ENCODE measurements at regions of chr11 and their contacts with region 1.

Region 1: GRCh38 chr11:19071255-19071654 is 10.7 kb upstream of the MRGPRX2 start:
- H3K4me3 ChIP-seq: no peak overlapping the region
- H3K27ac ChIP-seq: no peak overlapping the region
- H3K4me1 ChIP-seq: no peaks in the 10 kb centered on the region
- CTCF ChIP-seq: peak; percentile 96

Region 2: GRCh38 chr11:18958221-18958910 is 112.9 kb before region 1 on chr11:
- CTCF ChIA-PET with region 1: no interaction called
- POLR2A ChIA-PET with region 1: no interaction called
- H3K4me3 ChIP-seq: no peak overlapping the region
- H3K27ac ChIP-seq: no peak overlapping the region
- H3K4me1 ChIP-seq: no peaks in the 10 kb centered on the region
- CTCF ChIP-seq: no peak

Region 3: DNA sequence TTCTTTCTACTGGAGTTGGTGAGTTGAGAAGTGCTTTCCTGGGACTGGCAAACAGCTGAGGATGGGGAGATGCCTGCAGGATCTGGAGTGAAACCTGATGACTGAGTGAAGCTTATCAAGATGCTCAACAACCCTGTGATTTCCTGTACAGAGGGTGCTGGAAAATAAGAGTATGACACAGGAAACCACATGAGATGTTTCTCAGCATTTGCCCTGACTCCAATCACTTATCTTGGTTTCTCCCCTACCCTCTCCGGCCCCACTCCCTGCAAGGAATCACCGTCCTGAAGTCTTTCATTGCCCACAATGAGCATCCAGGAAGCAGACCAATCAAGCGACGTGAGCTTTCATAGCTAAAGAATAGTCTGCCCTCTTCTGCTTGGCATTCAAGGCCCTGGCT is 10.6 kb before region 1 on chr11 and contains the start of gene MRGPRX2:
- CTCF ChIA-PET with region 1: interaction called, 23 read pairs
- POLR2A ChIA-PET with region 1: no interaction called
- H3K4me3 ChIP-seq: no peak within 1 kb of the TSS
- H3K27ac ChIP-seq: no peak within 1 kb of the TSS
- H3K4me1 ChIP-seq: no peaks in the 10 kb centered on the region
- CTCF ChIP-seq: no peak

Region 4: GRCh38 chr11:19087658-19088057 is 16.4 kb after region 1 on chr11:
- CTCF ChIA-PET with region 1: interaction called, 16 read pairs
- POLR2A ChIA-PET with region 1: no interaction called
- H3K4me3 ChIP-seq: no peak overlapping the region
- H3K27ac ChIP-seq: no peak overlapping the region
- H3K4me1 ChIP-seq: no peaks in the 10 kb centered on the region
- CTCF ChIP-seq: no peak

Region 5: GRCh38 chr11:19116971-19117750 is 45.9 kb after region 1 on chr11 and contains the start of gene ZDHHC13:
- CTCF ChIA-PET with region 1: interaction called, 13 read pairs
- POLR2A ChIA-PET with region 1: no interaction called
- H3K4me3 ChIP-seq: peak within 1 kb of the TSS; percentile 97
- H3K27ac ChIP-seq: peak within 1 kb of the TSS; percentile 58; the same call in 1 of the 2 replicates
- H3K4me1 ChIP-seq: no peaks in the 10 kb centered on the region
- CTCF ChIP-seq: peak; percentile 70

Region 6: DNA sequence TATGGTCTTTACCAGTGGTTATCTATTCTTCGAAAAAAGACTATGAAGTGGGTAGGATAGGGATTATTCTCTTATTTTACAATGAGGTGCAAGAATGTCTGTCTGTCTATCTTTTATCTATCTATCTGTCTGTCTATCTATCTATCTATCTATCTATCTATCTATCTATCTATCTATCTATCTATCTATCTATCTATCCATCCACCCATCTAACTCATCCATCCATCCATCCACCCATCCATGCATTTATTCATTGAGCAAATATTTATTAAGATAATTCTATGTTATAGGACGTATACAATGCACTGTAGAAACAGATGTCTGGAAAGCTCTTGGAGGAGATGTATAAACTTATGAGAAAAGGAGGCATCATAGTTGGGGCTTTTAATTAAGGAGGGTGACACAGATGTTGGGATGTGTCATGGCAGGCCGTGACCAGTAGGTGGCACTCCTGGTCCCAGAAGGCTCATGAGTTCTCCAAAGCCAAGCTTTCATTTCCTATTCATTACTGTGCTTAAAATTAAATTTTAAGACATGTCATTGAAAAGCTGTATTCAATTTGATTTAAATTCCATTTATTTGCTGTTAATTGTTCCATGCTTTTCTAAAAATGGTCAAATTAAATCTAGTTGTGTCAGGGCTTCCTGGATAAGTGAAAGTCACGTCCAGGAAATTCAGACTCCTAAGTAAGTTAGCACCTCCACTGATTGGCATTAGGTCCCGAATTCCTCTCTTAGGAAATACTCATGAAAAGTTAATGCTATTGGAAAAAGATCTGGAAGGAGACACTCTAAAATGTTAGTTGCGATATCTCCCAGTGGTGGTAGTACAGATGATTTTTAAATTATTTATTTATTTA is 188.5 kb after region 1 on chr11:
- CTCF ChIA-PET with region 1: interaction called, 11 read pairs
- POLR2A ChIA-PET with region 1: no interaction called
- H3K4me3 ChIP-seq: no peak overlapping the region
- H3K27ac ChIP-seq: no peak overlapping the region
- H3K4me1 ChIP-seq: no peaks in the 10 kb centered on the region
- CTCF ChIP-seq: no peak

Region 7: GRCh38 chr11:19524161-19524671 is 453.0 kb after region 1 on chr11:
- CTCF ChIA-PET with region 1: interaction called, 12 read pairs
- POLR2A ChIA-PET with region 1: interaction called, 4 read pairs
- H3K4me3 ChIP-seq: no peak overlapping the region
- H3K27ac ChIP-seq: no peak overlapping the region
- H3K4me1 ChIP-seq: peaks cover 9% of the 10 kb centered on the region
- CTCF ChIP-seq: no peak